CD4-positive, alpha-beta T cell (primary cell): ENCODE measurements at regions of chrX and their contacts with region 1.

Region 1: GRCh38 chrX:54182864-54183608 is at the start of gene FAM120C:
- DNase-seq: peak; percentile 41 to 82 (median 56)
- ATAC-seq: peak; percentile 69
- H3K4me3 ChIP-seq: peak within 1 kb of the TSS; percentile 67
- H3K4me3 Mint-ChIP-seq: peak within 1 kb of the TSS; percentile 92
- H3K27ac ChIP-seq: peak within 1 kb of the TSS; percentile 69 to 75
- H3K27ac Mint-ChIP-seq: peak within 1 kb of the TSS; percentile 86
- H3K4me1 ChIP-seq: peaks cover 29% of the 10 kb centered on the region
- H3K4me1 Mint-ChIP-seq: peaks cover 42% of the 10 kb centered on the region
- H3K27me3 ChIP-seq: no peaks in the 10 kb centered on the region
- H3K27me3 Mint-ChIP-seq: no peaks in the 10 kb centered on the region
- CTCF ChIP-seq: no peak
- total RNA-seq, gene FAM120C: 12.3 to 13.3 TPM

Region 2: DNA sequence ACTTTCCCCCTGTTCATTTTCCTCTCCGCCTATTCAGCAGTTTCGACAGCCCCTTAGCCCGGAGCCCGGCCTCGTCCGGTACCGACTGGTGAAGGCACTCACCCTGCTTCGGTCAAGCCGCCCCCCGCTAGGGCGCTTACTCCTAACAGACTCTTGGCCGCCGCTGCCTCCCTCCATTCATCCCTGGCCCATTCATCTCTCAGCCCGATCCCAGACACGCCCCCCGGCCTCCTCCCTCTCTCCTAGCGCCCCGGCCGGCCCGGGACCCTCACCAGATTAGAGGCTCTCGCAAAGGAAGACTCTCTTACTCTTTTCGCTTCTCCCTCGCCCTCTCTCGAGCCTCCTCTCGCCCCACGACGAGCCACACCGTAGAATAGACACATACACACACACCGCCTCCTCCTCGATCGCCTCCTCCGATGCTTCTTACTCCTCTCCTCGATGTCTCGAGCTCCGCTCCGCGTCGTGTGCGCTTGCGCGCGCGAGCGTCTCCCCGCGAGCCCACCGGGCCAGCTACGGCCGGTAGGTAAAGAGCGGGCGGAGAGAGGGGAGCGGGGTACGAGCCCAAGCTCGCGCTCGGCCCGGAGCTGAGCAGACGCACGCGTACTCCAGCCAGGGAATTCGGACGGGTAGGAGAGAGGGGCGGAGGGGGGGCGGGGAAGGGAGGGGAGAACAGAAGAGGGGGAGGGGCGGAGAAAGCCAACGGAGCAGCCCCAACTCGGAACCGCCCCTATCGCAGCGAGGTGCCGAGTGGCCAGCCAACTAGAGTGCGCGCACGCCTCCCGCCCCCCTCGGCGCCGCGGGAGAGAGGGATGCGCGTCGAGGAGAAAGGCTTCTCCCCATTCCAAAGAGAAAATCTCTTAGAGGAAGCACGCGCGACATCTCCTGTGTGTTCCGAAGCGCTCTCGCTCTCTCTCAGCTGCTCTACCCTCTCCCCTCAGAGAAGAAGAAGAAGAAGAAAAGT is 174.7 kb after region 1 on chrX and contains the start of gene WNK3:
- CTCF ChIA-PET with region 1: no interaction called
- POLR2A ChIA-PET with region 1: no interaction called
- intact Hi-C with region 1: loop called in 1 of 2 experiments (anchors 5 kb)
- DNase-seq: peak; percentile 2 to 64 (median 28)
- ATAC-seq: peak; percentile 62
- H3K4me3 ChIP-seq: peak within 1 kb of the TSS; percentile 50
- H3K4me3 Mint-ChIP-seq: peak within 1 kb of the TSS; percentile 88
- H3K27ac ChIP-seq: no peak within 1 kb of the TSS
- H3K27ac Mint-ChIP-seq: peak within 1 kb of the TSS; percentile 10
- H3K4me1 ChIP-seq: peaks cover 20% of the 10 kb centered on the region
- H3K4me1 Mint-ChIP-seq: peaks cover 21% of the 10 kb centered on the region
- H3K27me3 ChIP-seq: peaks cover 4 to 13% of the 10 kb centered on the region in 2 experiments
- H3K27me3 Mint-ChIP-seq: peaks cover 40% of the 10 kb centered on the region
- CTCF ChIP-seq: no peak
- total RNA-seq, gene WNK3: 0.16 to 0.25 TPM

Region 3: DNA sequence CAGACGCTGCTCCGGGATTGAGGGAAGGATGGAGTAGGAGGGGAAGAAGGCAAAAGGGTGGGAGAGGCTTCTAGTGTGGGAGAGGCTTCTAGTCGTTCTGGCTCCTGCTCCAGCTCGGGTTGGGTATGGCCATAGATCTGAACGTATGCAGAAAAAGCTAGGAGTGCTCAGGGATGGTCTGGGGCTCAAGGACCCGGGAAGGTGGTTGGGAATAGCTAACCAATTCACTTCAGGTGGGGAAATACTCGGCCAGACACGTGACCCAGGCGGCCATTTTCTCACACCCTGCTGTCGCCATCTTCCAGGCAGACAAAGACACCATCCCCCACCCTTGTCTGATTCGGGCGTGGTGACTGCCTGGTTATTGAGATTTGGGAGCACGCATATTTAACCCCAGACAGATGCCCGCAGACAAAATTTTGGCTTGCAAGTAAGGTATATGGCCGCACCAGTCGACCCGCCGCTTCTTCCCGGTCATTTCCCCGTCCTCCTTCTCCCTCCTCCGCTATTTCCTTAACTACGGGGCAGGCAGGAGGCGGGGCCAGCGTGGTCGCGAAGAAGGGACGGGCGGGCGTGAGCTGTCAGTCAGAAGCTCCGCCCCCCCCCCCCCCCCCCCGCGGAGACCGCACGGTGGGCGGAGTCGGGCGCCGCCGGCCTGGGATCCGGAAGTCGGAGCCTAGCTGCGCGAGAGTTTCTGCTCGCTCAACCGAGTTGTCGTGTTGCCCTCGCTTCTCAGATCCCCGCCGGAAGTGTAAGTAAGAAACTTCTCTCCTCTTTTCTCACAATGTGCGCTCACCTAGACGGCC is 346.7 kb after region 1 on chrX and contains the start of gene GNL3L:
- CTCF ChIA-PET with region 1: no interaction called
- POLR2A ChIA-PET with region 1: interaction called, 13 read pairs
- intact Hi-C with region 1: loop called in 1 of 2 experiments (anchors 5 kb)
- DNase-seq: peak; percentile 56 to 90 (median 79)
- ATAC-seq: peak; percentile 84
- H3K4me3 ChIP-seq: peak within 1 kb of the TSS; percentile 76
- H3K4me3 Mint-ChIP-seq: peak within 1 kb of the TSS; percentile 99
- H3K27ac ChIP-seq: peak within 1 kb of the TSS; percentile 64 to 90
- H3K27ac Mint-ChIP-seq: peak within 1 kb of the TSS; percentile 94
- H3K4me1 ChIP-seq: peaks cover 38% of the 10 kb centered on the region
- H3K4me1 Mint-ChIP-seq: peaks cover 44% of the 10 kb centered on the region
- H3K27me3 ChIP-seq: no peaks in the 10 kb centered on the region
- H3K27me3 Mint-ChIP-seq: no peaks in the 10 kb centered on the region
- CTCF ChIP-seq: no peak
- total RNA-seq, gene GNL3L: 21.5 to 22.8 TPM